Activated CD4-positive, alpha-beta memory T cell treated with anti-CD3 and anti-CD28 coated beads, Interleukin-2, amount 10 ng/mL, durations not matched to agents 7 days and 5 days (primary cell): ENCODE measurements at regions of chr2 and their contacts with region 1.

Region 1: GRCh38 chr2:203814661-203815540 is 52.7 kb upstream of the CTLA4 start:
- DNase-seq: peak; percentile 55
- H3K4me3 Mint-ChIP-seq: no peak overlapping the region
- H3K27ac Mint-ChIP-seq: no peak overlapping the region
- H3K4me1 Mint-ChIP-seq: peaks cover 57% of the 10 kb centered on the region
- H3K27me3 Mint-ChIP-seq: peaks cover 6% of the 10 kb centered on the region

Region 2: DNA sequence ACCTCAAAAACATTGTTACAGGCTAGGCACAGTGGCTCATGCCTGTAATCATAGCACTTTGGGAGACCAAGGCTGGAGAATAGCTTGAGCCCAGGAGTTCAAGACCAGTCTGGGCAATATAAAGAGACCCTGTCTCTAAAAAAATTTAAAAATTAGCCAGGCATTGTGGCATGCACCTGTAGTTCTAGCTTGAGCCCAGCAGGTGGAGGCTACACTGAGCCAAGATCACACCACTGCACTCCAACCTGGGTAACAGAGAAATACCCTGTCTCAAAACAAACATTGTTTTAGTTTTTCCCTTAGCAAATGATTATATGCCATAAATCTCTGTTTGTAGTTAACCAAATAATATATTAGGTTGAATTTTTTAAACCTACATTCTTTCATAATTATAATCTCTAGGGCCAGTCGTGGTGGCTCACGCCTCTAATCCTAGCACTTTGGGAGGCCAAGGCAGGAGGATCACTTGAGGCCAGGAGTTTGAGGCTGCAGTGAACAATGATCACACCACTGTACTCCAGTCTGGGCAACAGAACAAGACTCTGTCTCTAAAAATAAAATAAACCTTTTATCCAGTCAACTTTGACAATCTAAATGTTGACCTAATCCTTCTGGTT is 589.4 kb before region 1 on chr2:
- CTCF ChIA-PET with region 1: interaction called, 21 read pairs
- POLR2A ChIA-PET with region 1: no interaction called
- DNase-seq: peak; percentile 40
- H3K4me3 Mint-ChIP-seq: no peak overlapping the region
- H3K27ac Mint-ChIP-seq: no peak overlapping the region
- H3K4me1 Mint-ChIP-seq: no peaks in the 10 kb centered on the region
- H3K27me3 Mint-ChIP-seq: no peaks in the 10 kb centered on the region

Region 3: DNA sequence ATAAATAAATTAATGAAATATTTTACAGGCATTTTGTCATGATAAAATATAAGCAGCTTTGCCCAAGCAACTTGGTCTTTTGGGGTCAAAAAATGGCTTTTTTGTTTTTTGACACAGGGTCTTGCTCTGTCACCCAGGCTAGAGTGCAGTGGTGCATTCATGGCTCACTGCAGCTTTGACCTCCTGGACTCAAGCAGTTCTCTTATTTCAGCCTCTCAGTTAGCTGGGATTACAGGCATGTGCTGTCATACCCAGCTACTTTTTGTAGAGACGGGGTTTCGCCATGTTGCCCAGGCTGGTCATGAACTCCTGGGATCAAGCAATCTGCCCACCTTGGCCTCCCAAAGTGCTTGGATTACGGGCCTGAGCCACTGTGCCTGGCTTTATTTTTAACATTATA is 435.7 kb before region 1 on chr2:
- CTCF ChIA-PET with region 1: no interaction called
- POLR2A ChIA-PET with region 1: no interaction called
- DNase-seq: no peak
- H3K4me3 Mint-ChIP-seq: no peak overlapping the region
- H3K27ac Mint-ChIP-seq: no peak overlapping the region
- H3K4me1 Mint-ChIP-seq: no peaks in the 10 kb centered on the region
- H3K27me3 Mint-ChIP-seq: no peaks in the 10 kb centered on the region

Region 4: GRCh38 chr2:203484266-203485112 is 330.4 kb before region 1 on chr2:
- CTCF ChIA-PET with region 1: interaction called, 86 read pairs
- POLR2A ChIA-PET with region 1: interaction called, 6 read pairs
- DNase-seq: peak; percentile 62
- H3K4me3 Mint-ChIP-seq: no peak overlapping the region
- H3K27ac Mint-ChIP-seq: no peak overlapping the region
- H3K4me1 Mint-ChIP-seq: peaks cover 6% of the 10 kb centered on the region
- H3K27me3 Mint-ChIP-seq: no peaks in the 10 kb centered on the region

Region 5: DNA sequence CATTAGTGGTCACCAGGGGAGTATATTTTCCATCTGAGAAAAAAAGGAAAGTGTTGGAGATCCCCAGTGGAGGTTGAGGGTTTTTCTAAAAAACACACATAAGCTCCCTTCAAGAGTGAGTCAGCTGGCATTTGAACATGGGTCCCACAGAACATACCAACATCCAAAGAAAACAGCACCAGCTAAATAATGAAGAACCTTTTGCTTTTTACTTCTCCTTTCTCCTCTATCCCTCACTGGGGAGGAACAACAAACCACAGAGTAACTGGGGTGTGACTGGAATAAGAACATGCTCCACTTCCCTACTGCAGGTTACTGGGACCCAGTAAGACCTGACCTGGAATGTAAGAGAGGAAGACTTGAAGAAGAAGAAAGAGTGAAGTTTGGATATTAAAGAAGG is 223.3 kb before region 1 on chr2:
- CTCF ChIA-PET with region 1: no interaction called
- POLR2A ChIA-PET with region 1: no interaction called
- DNase-seq: no peak
- H3K4me3 Mint-ChIP-seq: no peak overlapping the region
- H3K27ac Mint-ChIP-seq: no peak overlapping the region
- H3K4me1 Mint-ChIP-seq: no peaks in the 10 kb centered on the region
- H3K27me3 Mint-ChIP-seq: peaks cover 27% of the 10 kb centered on the region

Region 6: GRCh38 chr2:203718087-203718486 is 96.8 kb before region 1 on chr2:
- CTCF ChIA-PET with region 1: interaction called, 27 read pairs
- POLR2A ChIA-PET with region 1: interaction called, 98 read pairs
- DNase-seq: peak; percentile 80
- H3K4me3 Mint-ChIP-seq: peak overlapping the region; percentile 50
- H3K27ac Mint-ChIP-seq: peak overlapping the region; percentile 93
- H3K4me1 Mint-ChIP-seq: peaks cover 99% of the 10 kb centered on the region
- H3K27me3 Mint-ChIP-seq: no peaks in the 10 kb centered on the region

Region 7: GRCh38 chr2:203756161-203756560 is 58.7 kb before region 1 on chr2:
- CTCF ChIA-PET with region 1: no interaction called
- POLR2A ChIA-PET with region 1: no interaction called
- DNase-seq: no peak
- H3K4me3 Mint-ChIP-seq: no peak overlapping the region
- H3K27ac Mint-ChIP-seq: no peak overlapping the region
- H3K4me1 Mint-ChIP-seq: peaks cover 11% of the 10 kb centered on the region
- H3K27me3 Mint-ChIP-seq: no peaks in the 10 kb centered on the region

Region 8: DNA sequence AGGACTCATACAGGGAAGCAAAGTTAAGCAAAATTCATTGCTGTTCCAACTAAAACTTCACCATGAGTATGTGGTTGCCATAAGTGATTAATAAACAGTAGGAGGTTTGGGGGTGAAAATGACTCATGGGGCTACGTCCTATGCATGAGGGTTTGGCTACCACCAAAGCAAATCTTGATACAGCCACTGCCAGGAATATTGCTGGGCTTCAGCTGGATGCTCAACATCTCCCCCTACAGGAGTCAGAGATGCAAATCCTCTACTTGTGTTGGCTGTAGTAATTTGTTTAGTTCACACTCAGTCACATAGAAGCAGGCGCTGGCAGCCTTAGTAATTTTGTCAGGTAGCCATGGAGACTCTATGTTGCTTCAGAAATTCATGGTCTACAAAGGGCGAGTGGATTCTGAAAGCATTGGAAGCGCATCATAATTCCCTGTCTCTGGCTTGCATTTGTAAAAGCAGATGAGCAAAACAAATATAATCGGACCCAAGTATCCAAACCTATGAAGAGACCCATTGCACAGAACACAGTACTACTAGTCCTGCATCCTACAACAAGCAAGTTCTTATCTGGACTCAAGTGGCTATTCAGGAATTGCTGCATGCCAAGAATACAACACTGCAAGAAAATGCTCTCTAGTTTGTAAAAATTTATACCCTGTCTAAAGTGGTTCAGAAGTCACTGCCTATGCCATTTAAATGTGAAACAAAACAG is 32.5 kb before region 1 on chr2:
- CTCF ChIA-PET with region 1: interaction called, 30 read pairs
- POLR2A ChIA-PET with region 1: interaction called, 3 read pairs
- DNase-seq: peak; percentile 73
- H3K4me3 Mint-ChIP-seq: no peak overlapping the region
- H3K27ac Mint-ChIP-seq: no peak overlapping the region
- H3K4me1 Mint-ChIP-seq: peaks cover 55% of the 10 kb centered on the region
- H3K27me3 Mint-ChIP-seq: no peaks in the 10 kb centered on the region

Region 9: GRCh38 chr2:203909261-203909967 is 94.5 kb after region 1 on chr2:
- CTCF ChIA-PET with region 1: interaction called, 93 read pairs
- POLR2A ChIA-PET with region 1: interaction called, 24 read pairs
- DNase-seq: no peak
- H3K4me3 Mint-ChIP-seq: peak overlapping the region; percentile 38
- H3K27ac Mint-ChIP-seq: peak overlapping the region; percentile 69
- H3K4me1 Mint-ChIP-seq: peaks cover 33% of the 10 kb centered on the region
- H3K27me3 Mint-ChIP-seq: peaks cover 3% of the 10 kb centered on the region

Region 10: GRCh38 chr2:204060841-204061240 is 245.9 kb after region 1 on chr2:
- CTCF ChIA-PET with region 1: no interaction called
- POLR2A ChIA-PET with region 1: no interaction called
- DNase-seq: no peak
- H3K4me3 Mint-ChIP-seq: no peak overlapping the region
- H3K27ac Mint-ChIP-seq: no peak overlapping the region
- H3K4me1 Mint-ChIP-seq: peaks cover 2% of the 10 kb centered on the region
- H3K27me3 Mint-ChIP-seq: no peaks in the 10 kb centered on the region